ENCODE measurements at regions of chr5 and their contacts with region 1.

Region 1: GRCh38 chr5:30392897-30393296 is 800.6 kb upstream of the CDH6 start:
- DNase-seq: no peak
- ATAC-seq: no peak
- H3K4me3 ChIP-seq: no peak overlapping the region
- H3K27ac ChIP-seq: no peak overlapping the region
- H3K4me1 ChIP-seq: no peaks in the 10 kb centered on the region
- H3K27me3 ChIP-seq: no peaks in the 10 kb centered on the region
- CTCF ChIP-seq: no peak

Region 2: DNA sequence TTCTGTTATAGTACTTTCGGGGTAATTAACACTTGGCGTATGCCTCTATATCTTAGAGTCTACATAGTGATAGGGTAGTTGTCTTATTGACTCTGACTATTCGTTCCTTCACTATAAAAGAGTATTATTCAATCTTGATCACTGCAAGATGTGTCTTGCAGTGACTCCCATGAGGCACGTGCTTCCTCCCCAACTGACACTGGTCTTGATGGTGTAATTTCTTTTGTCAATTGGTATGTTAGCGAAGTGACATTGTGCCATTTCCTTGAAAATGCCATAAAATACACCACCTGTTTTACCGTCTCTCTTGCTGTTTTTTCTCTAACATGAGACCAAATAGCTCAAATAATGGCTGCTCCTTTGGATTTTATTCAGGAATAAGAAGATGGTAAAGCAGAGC is 513.5 kb before region 1 on chr5:
- intact Hi-C with region 1: loop called in 1 of 10 experiments (anchors 5 kb)
- DNase-seq: no peak
- ATAC-seq: no peak
- H3K4me3 ChIP-seq: no peak overlapping the region
- H3K27ac ChIP-seq: no peak overlapping the region
- H3K4me1 ChIP-seq: no peaks in the 10 kb centered on the region
- H3K27me3 ChIP-seq: no peaks in the 10 kb centered on the region
- CTCF ChIP-seq: no peak

Region 3: GRCh38 chr5:30357371-30357770 is 35.5 kb before region 1 on chr5:
- intact Hi-C with region 1: no loop called
- DNase-seq: no peak
- ATAC-seq: no peak
- H3K4me3 ChIP-seq: no peak overlapping the region
- H3K27ac ChIP-seq: no peak overlapping the region
- H3K4me1 ChIP-seq: no peaks in the 10 kb centered on the region
- H3K27me3 ChIP-seq: no peaks in the 10 kb centered on the region
- CTCF ChIP-seq: no peak

Region 4: GRCh38 chr5:30690931-30691330 is 298.0 kb after region 1 on chr5:
- intact Hi-C with region 1: no loop called
- DNase-seq: no peak
- ATAC-seq: no peak
- H3K4me3 ChIP-seq: no peak overlapping the region
- H3K27ac ChIP-seq: no peak overlapping the region
- H3K4me1 ChIP-seq: no peaks in the 10 kb centered on the region
- H3K27me3 ChIP-seq: no peaks in the 10 kb centered on the region
- CTCF ChIP-seq: no peak

Region 5: DNA sequence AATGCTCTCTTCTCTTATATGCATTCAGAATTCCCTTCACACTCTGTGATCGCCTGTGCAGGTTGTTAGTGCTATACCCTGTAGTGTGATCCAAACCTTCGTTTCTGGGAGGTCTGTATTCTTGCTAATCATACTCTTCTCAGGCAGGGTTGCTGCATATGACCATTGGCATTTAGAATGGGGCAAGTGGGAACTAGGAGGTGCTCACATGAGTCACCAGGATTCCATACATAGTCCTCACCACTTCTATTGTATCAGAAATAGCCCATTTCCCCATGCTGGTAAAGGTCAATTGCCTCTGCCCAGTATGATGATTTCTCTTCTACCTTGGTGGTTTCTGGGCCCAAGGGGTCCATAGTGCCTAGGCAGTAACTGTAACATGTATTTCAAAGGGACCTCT is 357.1 kb after region 1 on chr5:
- intact Hi-C with region 1: no loop called
- DNase-seq: no peak
- ATAC-seq: no peak
- H3K4me3 ChIP-seq: no peak overlapping the region
- H3K27ac ChIP-seq: no peak overlapping the region
- H3K4me1 ChIP-seq: no peaks in the 10 kb centered on the region
- H3K27me3 ChIP-seq: no peaks in the 10 kb centered on the region
- CTCF ChIP-seq: no peak